BJ (cell line): ENCODE measurements at regions of chr14 and their contacts with region 1.

Region 1: DNA sequence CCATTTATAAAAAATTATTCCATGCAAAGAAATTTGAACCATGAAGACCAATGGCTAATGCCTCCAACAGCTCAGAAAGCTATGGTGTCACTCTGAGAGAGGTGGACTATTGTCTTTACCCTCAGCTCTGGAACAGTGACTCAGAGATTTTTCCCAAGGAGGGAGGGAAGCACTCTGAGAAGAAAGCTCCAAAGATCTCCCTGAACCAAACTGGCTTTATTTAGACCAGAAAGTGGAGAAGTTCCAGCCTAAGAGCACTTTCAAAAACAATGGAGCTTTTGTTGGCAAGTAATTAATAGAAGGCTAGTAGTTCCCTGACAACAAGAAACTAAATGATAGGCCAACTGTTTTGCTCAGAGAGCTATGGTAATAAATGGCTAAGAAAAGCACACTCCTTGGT is 599.9 kb upstream of the MDGA2 start:
- DNase-seq: no peak
- H3K4me3 ChIP-seq: no peak overlapping the region
- H3K27me3 ChIP-seq: no peaks in the 10 kb centered on the region
- CTCF ChIP-seq: no peak

Region 2: GRCh38 chr14:48113713-48114112 is 161.6 kb before region 1 on chr14:
- CTCF ChIA-PET with region 1: no interaction called
- POLR2A ChIA-PET with region 1: interaction called, 10 read pairs
- DNase-seq: no peak
- H3K4me3 ChIP-seq: no peak overlapping the region
- H3K27me3 ChIP-seq: no peaks in the 10 kb centered on the region
- CTCF ChIP-seq: no peak

Region 3: GRCh38 chr14:48304729-48305128 is 29.4 kb after region 1 on chr14:
- CTCF ChIA-PET with region 1: no interaction called
- POLR2A ChIA-PET with region 1: no interaction called
- DNase-seq: no peak
- H3K4me3 ChIP-seq: no peak overlapping the region
- H3K27me3 ChIP-seq: no peaks in the 10 kb centered on the region
- CTCF ChIP-seq: no peak